ENCODE measurements at regions of chr10 and their contacts with region 1.

Region 1: GRCh38 chr10:91298224-91298871 is 77.9 kb downstream of the PCGF5 start:
- DNase-seq: peak; percentile 62 to 84 (median 69)
- ATAC-seq: peak; percentile 74 to 89 (median 88)
- H3K4me3 ChIP-seq: peak overlapping the region in 11 of 12 donors; percentile 6 to 62 (median 47)
- H3K27ac ChIP-seq: peak overlapping the region in 2 of 12 donors; percentile 37
- H3K4me1 ChIP-seq: peaks cover 0 to 10% (median 4%) of the 10 kb centered on the region in 12 donors
- H3K27me3 ChIP-seq: peaks cover 0 to 5% (median 0%) of the 10 kb centered on the region in 9 donors
- CTCF ChIP-seq: peak; percentile 81 to 96 (median 93)
- POLR2A ChIP-seq: no peak

Region 2: GRCh38 chr10:90227217-90227656 is 1071.1 kb before region 1 on chr10:
- intact Hi-C with region 1: no loop called
- DNase-seq: no peak
- ATAC-seq: no peak
- H3K4me3 ChIP-seq: no peak overlapping the region
- H3K27ac ChIP-seq: no peak overlapping the region
- H3K4me1 ChIP-seq: no peaks in the 10 kb centered on the region
- H3K27me3 ChIP-seq: no peaks in the 10 kb centered on the region
- CTCF ChIP-seq: no peak
- POLR2A ChIP-seq: no peak

Region 3: DNA sequence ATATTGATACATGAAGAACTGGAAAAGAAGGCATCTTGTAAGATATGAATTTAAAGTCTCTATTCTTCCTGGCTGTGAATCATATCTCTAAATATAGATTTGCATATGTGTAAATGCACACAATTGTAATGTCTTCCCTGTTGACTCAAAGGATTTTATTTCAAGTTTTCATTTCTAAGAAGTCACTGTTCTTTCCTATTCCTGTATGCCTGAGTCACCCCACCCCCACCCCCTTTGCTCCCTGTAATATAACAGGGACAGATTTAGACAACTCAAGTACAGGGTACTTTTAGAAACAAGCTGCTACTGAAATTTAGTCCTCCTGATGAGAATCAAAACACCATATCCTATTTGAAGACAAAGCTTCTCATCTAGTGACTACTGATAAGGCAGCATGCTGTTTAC is 68.8 kb after region 1 on chr10:
- intact Hi-C with region 1: loop called in 3 of 10 experiments (anchors 2 to 5 kb)
- DNase-seq: no peak
- ATAC-seq: peak; percentile 79 to 96 (median 88)
- H3K4me3 ChIP-seq: no peak overlapping the region
- H3K27ac ChIP-seq: peak overlapping the region in 3 of 12 donors; percentile 4 to 46 (median 9)
- H3K4me1 ChIP-seq: peaks cover 0 to 21% (median 0%) of the 10 kb centered on the region in 12 donors
- H3K27me3 ChIP-seq: no peaks in the 10 kb centered on the region
- CTCF ChIP-seq: no peak
- POLR2A ChIP-seq: no peak

Region 4: GRCh38 chr10:91374052-91374451 is 75.7 kb after region 1 on chr10:
- intact Hi-C with region 1: loop called in 3 of 10 experiments (anchors 2 to 5 kb)
- DNase-seq: no peak
- ATAC-seq: no peak
- H3K4me3 ChIP-seq: no peak overlapping the region
- H3K27ac ChIP-seq: no peak overlapping the region
- H3K4me1 ChIP-seq: no peaks in the 10 kb centered on the region
- H3K27me3 ChIP-seq: no peaks in the 10 kb centered on the region
- CTCF ChIP-seq: no peak
- POLR2A ChIP-seq: no peak

Region 5: DNA sequence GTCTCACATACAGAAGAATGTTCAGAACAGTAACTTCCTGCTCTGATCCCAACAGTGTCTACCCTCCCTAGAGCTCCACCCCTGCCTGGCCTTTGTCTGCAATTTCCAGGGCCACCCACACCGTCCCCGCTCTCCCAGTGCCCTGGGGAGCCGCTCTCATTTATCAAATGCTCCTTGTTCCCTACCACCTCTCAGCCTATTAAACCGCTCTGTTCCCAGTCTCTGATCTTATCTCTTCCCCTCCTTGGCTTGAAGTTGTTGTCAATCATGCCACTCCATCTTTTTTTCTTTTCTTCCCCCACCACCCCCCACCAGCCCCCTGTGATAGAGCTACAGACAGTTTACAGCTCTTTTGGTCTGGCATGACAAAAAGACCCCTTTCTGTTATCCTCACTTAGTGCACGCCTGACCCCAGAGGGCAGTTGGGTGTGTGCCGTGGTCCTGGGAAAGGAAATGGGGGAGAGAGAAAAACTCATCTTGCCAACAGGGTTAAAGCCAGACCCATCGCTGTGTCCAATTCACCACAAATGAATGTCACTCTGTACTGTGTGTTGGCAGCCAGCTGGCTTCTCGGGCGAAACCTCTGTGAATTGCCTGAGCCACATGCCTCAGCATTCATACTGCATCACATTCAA is 83.0 kb after region 1 on chr10:
- intact Hi-C with region 1: loop called in 7 of 10 experiments (anchors 5 kb)
- DNase-seq: peak in 4 of 5 donors; percentile 15 to 45 (median 28)
- ATAC-seq: peak; percentile 86 to 91 (median 88)
- H3K4me3 ChIP-seq: peak overlapping the region in 6 of 12 donors; percentile 5 to 24 (median 14)
- H3K27ac ChIP-seq: peak overlapping the region in 2 of 12 donors; percentile 21 to 49
- H3K4me1 ChIP-seq: peaks cover 0 to 18% (median 7%) of the 10 kb centered on the region in 12 donors
- H3K27me3 ChIP-seq: no peaks in the 10 kb centered on the region
- CTCF ChIP-seq: no peak
- POLR2A ChIP-seq: no peak

Region 6: GRCh38 chr10:91551856-91552255 is 253.5 kb after region 1 on chr10:
- intact Hi-C with region 1: loop called in 8 of 10 experiments (anchors 2 to 10 kb)
- DNase-seq: peak in 4 of 5 donors; percentile 49 to 66 (median 54)
- ATAC-seq: peak; percentile 72 to 87 (median 81)
- H3K4me3 ChIP-seq: peak overlapping the region in 8 of 12 donors; percentile 21 to 49 (median 33)
- H3K27ac ChIP-seq: peak overlapping the region in 6 of 12 donors; percentile 18 to 73 (median 44)
- H3K4me1 ChIP-seq: peaks cover 0 to 21% (median 4%) of the 10 kb centered on the region in 12 donors
- H3K27me3 ChIP-seq: no peaks in the 10 kb centered on the region
- CTCF ChIP-seq: peak; percentile 39 to 86 (median 65)
- POLR2A ChIP-seq: no peak